ENCODE measurements at regions of chr1 and their contacts with region 1.

Region 1: GRCh38 chr1:97911266-97912215 is 9.3 kb downstream of the DPYD start:
- DNase-seq: peak in 1 of 9 experiments; percentile 33
- ATAC-seq: peak; percentile 51
- H3K4me3 ChIP-seq: no peak overlapping the region
- H3K4me3 Mint-ChIP-seq: peak overlapping the region; percentile 4
- H3K27ac ChIP-seq: no peak overlapping the region
- H3K27ac Mint-ChIP-seq: no peak overlapping the region
- H3K4me1 ChIP-seq: peaks cover 12% of the 10 kb centered on the region
- H3K4me1 Mint-ChIP-seq: peaks cover 50% of the 10 kb centered on the region
- H3K27me3 ChIP-seq: no peaks in the 10 kb centered on the region
- H3K27me3 Mint-ChIP-seq: no peaks in the 10 kb centered on the region
- CTCF ChIP-seq: no peak

Region 2: DNA sequence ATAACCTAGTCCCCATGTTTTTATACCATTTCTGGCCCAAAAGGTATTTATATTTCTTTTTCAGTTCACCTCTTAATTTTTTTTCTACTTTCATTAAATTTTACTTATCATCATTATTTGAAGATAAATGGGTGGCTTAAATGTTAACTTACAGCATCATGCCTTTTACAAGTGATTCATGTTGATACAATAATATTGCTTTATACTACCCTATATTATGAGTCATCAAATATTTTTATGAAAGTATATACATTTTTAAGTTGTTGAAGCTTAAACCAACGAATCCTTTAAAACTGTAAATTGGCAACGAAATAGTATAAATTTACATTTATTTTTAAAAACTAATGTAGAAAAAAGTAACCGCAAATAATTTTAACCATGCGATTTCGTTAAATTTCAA is 198.6 kb before region 1 on chr1:
- CTCF ChIA-PET with region 1: no interaction called
- POLR2A ChIA-PET with region 1: no interaction called
- intact Hi-C with region 1: no loop called
- DNase-seq: no peak
- ATAC-seq: no peak
- H3K4me3 ChIP-seq: no peak overlapping the region
- H3K4me3 Mint-ChIP-seq: no peak overlapping the region
- H3K27ac ChIP-seq: no peak overlapping the region
- H3K27ac Mint-ChIP-seq: no peak overlapping the region
- H3K4me1 ChIP-seq: no peaks in the 10 kb centered on the region
- H3K4me1 Mint-ChIP-seq: no peaks in the 10 kb centered on the region
- H3K27me3 ChIP-seq: no peaks in the 10 kb centered on the region
- H3K27me3 Mint-ChIP-seq: no peaks in the 10 kb centered on the region
- CTCF ChIP-seq: no peak

Region 3: DNA sequence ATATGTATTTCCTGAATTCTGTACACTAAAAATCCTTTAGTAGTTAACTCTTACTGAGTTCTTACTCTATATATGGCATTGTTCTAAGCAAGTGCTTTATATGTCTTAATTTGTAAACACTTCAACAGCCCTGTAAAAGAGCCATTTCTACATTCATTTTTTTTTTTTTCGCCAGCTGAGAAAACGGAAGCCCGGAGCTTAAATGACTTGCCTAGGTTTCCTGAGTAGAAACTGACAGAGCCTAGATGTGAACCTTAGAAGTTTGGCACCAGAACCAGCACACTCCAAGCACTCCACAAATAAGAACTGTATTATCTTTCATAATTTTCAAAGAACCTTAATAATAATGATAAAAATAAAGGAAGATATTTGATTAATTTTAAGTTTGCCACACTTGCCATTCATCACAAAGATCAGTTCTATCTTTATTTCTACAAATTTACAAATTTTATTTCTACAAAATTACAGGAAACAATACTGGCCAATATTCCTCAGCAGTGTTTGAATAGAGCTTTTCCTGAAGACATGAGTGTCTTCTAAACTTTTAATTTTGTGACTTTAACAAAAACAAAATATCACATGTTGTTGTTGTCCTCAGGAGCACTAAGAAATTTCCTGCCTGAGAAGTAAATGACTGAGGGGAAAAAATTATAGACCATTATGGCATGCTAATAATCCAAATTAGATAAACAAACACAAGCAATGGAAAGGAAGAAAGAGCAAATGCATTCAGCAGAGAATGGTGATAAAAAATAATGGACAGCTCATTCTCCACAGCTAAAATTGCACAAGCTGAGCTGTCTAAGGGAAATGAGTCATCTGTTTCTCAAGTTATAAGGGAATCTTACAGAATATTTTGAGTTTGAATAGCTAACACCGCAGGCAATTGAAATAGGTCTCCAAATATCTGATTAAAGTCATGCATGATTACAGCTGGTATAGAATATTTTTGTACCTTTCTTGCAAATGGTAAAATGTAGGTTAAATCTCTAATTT is 61.9 kb before region 1 on chr1:
- CTCF ChIA-PET with region 1: interaction called, 3 read pairs
- POLR2A ChIA-PET with region 1: no interaction called
- intact Hi-C with region 1: loop called in 1 of 2 experiments (anchors 5 kb)
- DNase-seq: peak in 1 of 9 experiments; percentile 19
- ATAC-seq: no peak
- H3K4me3 ChIP-seq: no peak overlapping the region
- H3K4me3 Mint-ChIP-seq: no peak overlapping the region
- H3K27ac ChIP-seq: no peak overlapping the region
- H3K27ac Mint-ChIP-seq: no peak overlapping the region
- H3K4me1 ChIP-seq: peaks cover 4% of the 10 kb centered on the region
- H3K4me1 Mint-ChIP-seq: peaks cover 26% of the 10 kb centered on the region
- H3K27me3 ChIP-seq: no peaks in the 10 kb centered on the region
- H3K27me3 Mint-ChIP-seq: no peaks in the 10 kb centered on the region
- CTCF ChIP-seq: no peak

Region 4: DNA sequence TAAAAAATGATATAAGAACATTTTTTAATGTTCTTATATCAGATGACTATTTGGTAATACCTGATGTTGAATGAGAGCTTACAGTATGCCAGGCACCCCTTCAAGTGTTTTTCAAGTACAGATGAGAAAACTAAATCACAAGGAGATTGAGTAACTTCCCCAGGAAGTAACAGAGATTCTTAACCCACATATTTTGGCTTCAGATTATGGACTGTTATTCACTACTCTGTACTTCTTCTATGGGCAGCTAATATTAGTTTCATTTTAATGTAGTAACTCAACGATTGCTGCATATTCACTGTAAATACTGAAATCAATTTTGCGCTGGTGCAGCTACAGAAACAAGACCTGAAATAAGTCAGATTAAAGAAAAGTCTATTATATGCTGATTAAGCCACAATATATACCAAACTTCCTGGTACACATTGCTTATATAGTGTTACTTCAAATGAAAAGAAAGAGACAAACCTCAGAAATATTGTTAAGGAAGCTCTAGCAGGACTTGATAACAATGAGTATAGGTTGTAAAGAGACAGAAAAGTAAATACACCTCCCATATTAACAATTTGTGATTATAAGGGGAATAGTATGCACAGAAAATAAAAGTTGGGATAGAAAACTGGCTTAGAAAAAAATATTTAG is 10.4 kb before region 1 on chr1:
- CTCF ChIA-PET with region 1: no interaction called
- POLR2A ChIA-PET with region 1: interaction called, 3 read pairs
- intact Hi-C with region 1: loop called in 1 of 2 experiments (anchors 2 kb)
- DNase-seq: peak in 1 of 9 experiments; percentile 23
- ATAC-seq: no peak
- H3K4me3 ChIP-seq: no peak overlapping the region
- H3K4me3 Mint-ChIP-seq: peak overlapping the region; percentile 20
- H3K27ac ChIP-seq: peak overlapping the region in 1 of 2 experiments; percentile 10
- H3K27ac Mint-ChIP-seq: peak overlapping the region; percentile 73
- H3K4me1 ChIP-seq: peaks cover 7% of the 10 kb centered on the region
- H3K4me1 Mint-ChIP-seq: peaks cover 53% of the 10 kb centered on the region
- H3K27me3 ChIP-seq: no peaks in the 10 kb centered on the region
- H3K27me3 Mint-ChIP-seq: no peaks in the 10 kb centered on the region
- CTCF ChIP-seq: no peak

Region 5: GRCh38 chr1:97929874-97930851 is 18.6 kb after region 1 on chr1:
- CTCF ChIA-PET with region 1: no interaction called
- POLR2A ChIA-PET with region 1: no interaction called
- intact Hi-C with region 1: loop called in 1 of 2 experiments (anchors 2 kb)
- DNase-seq: no peak
- ATAC-seq: no peak
- H3K4me3 ChIP-seq: no peak overlapping the region
- H3K4me3 Mint-ChIP-seq: no peak overlapping the region
- H3K27ac ChIP-seq: no peak overlapping the region
- H3K27ac Mint-ChIP-seq: no peak overlapping the region
- H3K4me1 ChIP-seq: no peaks in the 10 kb centered on the region
- H3K4me1 Mint-ChIP-seq: peaks cover 5% of the 10 kb centered on the region
- H3K27me3 ChIP-seq: no peaks in the 10 kb centered on the region
- H3K27me3 Mint-ChIP-seq: no peaks in the 10 kb centered on the region
- CTCF ChIP-seq: no peak